ENCODE measurements at regions of chr19 and their contacts with region 1.

Region 1: DNA sequence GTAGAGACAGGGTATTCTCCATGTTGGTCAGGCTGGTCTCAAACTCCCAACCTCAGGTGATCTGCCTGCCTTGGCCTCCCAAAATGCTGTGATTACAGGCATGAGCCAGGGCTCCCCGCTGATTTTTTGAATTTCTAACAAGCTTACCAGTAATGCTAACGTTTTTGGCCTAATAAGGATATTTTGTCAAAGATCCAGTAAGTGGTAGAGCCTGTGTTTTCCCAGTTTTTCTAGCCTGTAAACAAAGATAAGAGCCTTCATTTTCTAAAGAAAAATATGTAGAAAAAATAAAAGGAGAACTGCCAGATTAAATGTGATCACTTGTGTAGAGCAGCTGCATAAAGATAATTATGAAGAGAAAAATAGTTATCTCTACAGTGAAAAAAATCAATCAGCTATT is 37.7 kb downstream of the ZNF93 start:
- DNase-seq: no peak
- ATAC-seq: no peak
- H3K4me3 ChIP-seq: no peak overlapping the region
- H3K4me3 Mint-ChIP-seq: no peak overlapping the region
- H3K27ac ChIP-seq: no peak overlapping the region
- H3K27ac Mint-ChIP-seq: no peak overlapping the region
- H3K4me1 ChIP-seq: no peaks in the 10 kb centered on the region
- H3K4me1 Mint-ChIP-seq: no peaks in the 10 kb centered on the region
- H3K27me3 ChIP-seq: peaks cover 0 to 4% of the 10 kb centered on the region in 2 experiments
- H3K27me3 Mint-ChIP-seq: no peaks in the 10 kb centered on the region

Region 2: DNA sequence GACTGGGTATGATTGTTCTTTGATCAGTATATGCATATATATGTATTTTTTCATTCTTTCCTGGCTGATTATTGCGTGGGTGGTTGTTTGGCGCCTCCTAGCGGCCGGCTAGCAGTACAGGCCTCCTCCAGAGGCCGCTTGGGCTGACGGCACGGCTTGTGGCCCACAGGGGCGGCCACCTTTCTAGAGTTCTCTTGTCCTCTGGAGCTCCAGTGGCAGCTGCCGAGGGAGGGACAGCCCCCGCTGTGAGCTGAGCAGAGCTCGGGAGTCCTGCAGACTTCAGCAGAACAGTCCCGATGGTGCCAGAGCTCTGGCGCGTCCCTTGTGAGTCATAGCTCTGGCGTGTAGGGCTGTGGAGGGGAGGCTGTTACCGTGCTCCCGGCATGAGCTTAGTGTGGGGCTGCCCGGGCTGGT is 1544.4 kb after region 1 on chr19:
- CTCF ChIA-PET with region 1: interaction called in 1 of 2 experiments, 11 read pairs
- POLR2A ChIA-PET with region 1: no interaction called
- DNase-seq: peak; percentile 26 to 85 (median 55)
- ATAC-seq: peak; percentile 74 to 85 (median 83)
- H3K4me3 ChIP-seq: no peak overlapping the region
- H3K4me3 Mint-ChIP-seq: no peak overlapping the region
- H3K27ac ChIP-seq: no peak overlapping the region
- H3K27ac Mint-ChIP-seq: no peak overlapping the region
- H3K4me1 ChIP-seq: peaks cover 0 to 7% of the 10 kb centered on the region in 2 experiments
- H3K4me1 Mint-ChIP-seq: peaks cover 0 to 1% (median 0%) of the 10 kb centered on the region in 3 donors
- H3K27me3 ChIP-seq: no peaks in the 10 kb centered on the region
- H3K27me3 Mint-ChIP-seq: no peaks in the 10 kb centered on the region

Measured in T-cell (primary cell).